OCI-LY7 (cell line): ENCODE measurements at regions of chr11 and their contacts with region 1.

Region 1: GRCh38 chr11:95231127-95231880 is at the start of gene SESN3:
- DNase-seq: peak; percentile 99
- H3K4me3 ChIP-seq: peak within 1 kb of the TSS; percentile 83
- H3K27ac ChIP-seq: peak within 1 kb of the TSS; percentile 61
- H3K4me1 ChIP-seq: peaks cover 35% of the 10 kb centered on the region
- CTCF ChIP-seq: peak; percentile 51; the same call in 1 of the 2 replicates
- total RNA-seq, gene SESN3: 3.4 and 4.4 TPM in 2 replicates

Region 2: GRCh38 chr11:95138448-95138847 is 92.9 kb before region 1 on chr11:
- CTCF ChIA-PET with region 1: no interaction called
- POLR2A ChIA-PET with region 1: no interaction called
- intact Hi-C with region 1: no loop called
- DNase-seq: peak; percentile 64
- H3K4me3 ChIP-seq: no peak overlapping the region
- H3K27ac ChIP-seq: no peak overlapping the region
- H3K4me1 ChIP-seq: no peaks in the 10 kb centered on the region
- CTCF ChIP-seq: peak; percentile 81

Region 3: GRCh38 chr11:95150946-95151684 is 80.2 kb before region 1 on chr11:
- CTCF ChIA-PET with region 1: interaction called, 4 read pairs
- POLR2A ChIA-PET with region 1: interaction called, 5 read pairs
- intact Hi-C with region 1: loop called (anchors 2 kb)
- DNase-seq: peak; percentile 92
- H3K4me3 ChIP-seq: peak overlapping the region; percentile 33
- H3K27ac ChIP-seq: no peak overlapping the region
- H3K4me1 ChIP-seq: peaks cover 26% of the 10 kb centered on the region
- CTCF ChIP-seq: peak; percentile 79

Region 4: DNA sequence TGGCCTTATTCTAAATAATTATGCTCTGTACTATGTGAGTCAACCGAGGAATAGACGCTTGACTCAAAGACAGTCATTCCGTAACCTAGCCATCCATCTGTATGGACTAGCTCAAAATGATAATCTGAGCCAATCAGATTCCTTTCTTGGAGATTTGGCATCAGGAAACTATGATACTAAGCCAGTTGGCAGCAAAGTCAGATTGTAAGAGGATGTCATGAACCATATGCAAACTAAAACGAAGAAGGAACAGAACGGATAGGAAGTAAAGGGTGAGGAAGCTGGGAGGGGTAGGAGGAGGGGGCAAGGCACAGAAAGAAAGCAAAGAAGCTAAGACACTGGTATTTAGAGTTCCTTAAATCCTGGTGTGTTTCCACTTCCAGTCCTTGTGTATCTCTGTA is 10.4 kb after region 1 on chr11:
- CTCF ChIA-PET with region 1: interaction called, 11 read pairs
- POLR2A ChIA-PET with region 1: interaction called, 20 read pairs
- intact Hi-C with region 1: no loop called
- DNase-seq: no peak
- H3K4me3 ChIP-seq: no peak overlapping the region
- H3K27ac ChIP-seq: no peak overlapping the region
- H3K4me1 ChIP-seq: no peaks in the 10 kb centered on the region
- CTCF ChIP-seq: no peak

Region 5: DNA sequence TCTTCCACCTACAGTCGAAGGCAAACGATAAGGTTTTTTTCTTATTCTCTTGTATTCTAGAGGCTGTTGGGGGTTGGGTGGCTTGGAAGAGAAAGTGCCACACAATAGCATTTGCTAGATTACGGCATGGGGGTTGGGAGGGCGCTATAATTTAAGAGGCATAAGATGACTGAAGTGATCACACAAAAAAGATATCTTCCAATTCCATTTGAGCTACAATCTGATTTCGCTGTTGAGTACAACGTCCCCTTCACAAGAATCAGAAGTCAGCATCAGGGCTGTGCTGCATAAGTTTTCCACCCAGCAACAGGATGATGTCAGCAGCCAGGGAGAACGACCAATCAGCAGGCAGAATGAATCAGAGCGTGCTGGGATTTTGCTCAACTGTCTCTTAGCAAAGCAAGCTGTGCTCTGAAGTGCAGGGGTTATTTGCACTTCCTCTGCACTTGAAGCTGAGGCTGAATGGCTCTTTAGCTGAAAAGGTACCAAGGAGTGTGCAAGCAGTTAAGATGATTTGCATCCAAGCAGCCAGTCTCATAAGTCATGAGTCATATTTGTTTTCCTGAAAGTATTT is 22.9 kb after region 1 on chr11:
- CTCF ChIA-PET with region 1: interaction called, 24 read pairs
- POLR2A ChIA-PET with region 1: interaction called, 122 read pairs
- intact Hi-C with region 1: loop called (anchors 1 kb)
- DNase-seq: peak; percentile 96
- H3K4me3 ChIP-seq: peak overlapping the region; percentile 45
- H3K27ac ChIP-seq: peak overlapping the region; percentile 85
- H3K4me1 ChIP-seq: peaks cover 66% of the 10 kb centered on the region
- CTCF ChIP-seq: no peak

Region 6: GRCh38 chr11:95715777-95716241 is 484.5 kb after region 1 on chr11:
- CTCF ChIA-PET with region 1: interaction called, 3 read pairs
- POLR2A ChIA-PET with region 1: interaction called, 9 read pairs
- intact Hi-C with region 1: loop called (anchors 5 kb)
- DNase-seq: peak; percentile 85
- H3K4me3 ChIP-seq: peak overlapping the region; percentile 49
- H3K27ac ChIP-seq: peak overlapping the region; percentile 78
- H3K4me1 ChIP-seq: peaks cover 59% of the 10 kb centered on the region
- CTCF ChIP-seq: no peak